Activated T-helper 1 cell treated with anti-CD3 and anti-CD28 coated beads, Interleukin-12 subunit alpha, Interleukin-12 subunit beta, Interleukin-2, Interleukin-4 antibody, amounts not matched to agents 30 ng/mL and 10 ng/mL and 1 ng/mL, durations not matched to agents 14 hours and 24 hours and 36 hours (primary cell): ENCODE measurements at regions of chr4 and their contacts with region 1.

Region 1: DNA sequence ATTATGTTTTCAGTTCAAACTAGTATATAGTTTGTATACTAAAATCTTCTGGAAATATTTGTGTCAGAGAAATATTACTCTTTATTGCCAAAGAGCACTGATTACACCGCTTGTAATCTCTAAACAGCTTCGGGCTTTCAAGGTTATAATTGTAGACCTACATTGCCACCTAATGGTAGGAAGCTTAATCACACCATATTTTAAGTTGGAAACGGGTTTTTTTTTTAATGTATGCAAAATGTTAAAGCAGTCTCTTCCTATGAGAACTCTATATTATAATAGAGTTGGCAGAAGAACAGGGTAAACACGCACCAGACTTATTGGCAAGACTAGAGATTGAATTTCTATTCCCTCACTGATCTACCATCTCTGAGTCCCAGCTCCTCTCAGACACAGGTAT is 19.5 kb upstream of the NFXL1 start:
- DNase-seq: no peak
- H3K4me3 Mint-ChIP-seq: no peak overlapping the region
- H3K27ac Mint-ChIP-seq: no peak overlapping the region
- H3K4me1 Mint-ChIP-seq: no peaks in the 10 kb centered on the region
- H3K27me3 Mint-ChIP-seq: peaks cover 6% of the 10 kb centered on the region

Region 2: GRCh38 chr4:47668810-47669408 is 264.9 kb before region 1 on chr4:
- intact Hi-C with region 1: loop called (anchors 1 kb)
- DNase-seq: no peak
- H3K4me3 Mint-ChIP-seq: no peak overlapping the region
- H3K27ac Mint-ChIP-seq: no peak overlapping the region
- H3K4me1 Mint-ChIP-seq: no peaks in the 10 kb centered on the region
- H3K27me3 Mint-ChIP-seq: peaks cover 14% of the 10 kb centered on the region

Region 3: DNA sequence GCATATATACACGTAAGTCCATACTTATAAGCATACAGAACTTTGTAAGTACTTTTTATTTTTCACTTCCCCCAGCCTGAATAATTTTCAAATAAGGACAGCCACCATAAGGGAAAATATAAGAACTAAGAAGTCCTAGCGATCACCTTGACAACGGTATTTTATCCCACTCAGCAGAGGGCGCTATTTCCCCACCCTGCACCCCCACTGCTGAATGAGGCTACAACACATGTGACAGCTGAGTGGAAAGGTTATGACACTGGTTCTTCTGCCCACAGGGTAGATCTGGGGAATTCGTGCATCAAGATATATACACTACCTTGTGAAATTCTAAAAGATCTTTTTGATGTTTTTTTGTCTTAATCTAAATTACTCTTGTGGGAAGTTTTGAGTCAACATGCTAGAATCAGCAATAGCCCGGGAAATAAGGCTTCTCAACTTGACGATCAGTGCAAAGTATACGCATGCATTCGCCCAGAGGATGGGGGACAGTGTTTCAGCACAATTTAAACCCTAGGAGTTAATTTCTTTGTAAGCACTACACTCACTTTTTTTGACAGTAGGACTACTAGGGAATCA is 247.5 kb before region 1 on chr4:
- intact Hi-C with region 1: loop called (anchors 1 kb)
- DNase-seq: peak; percentile 29
- H3K4me3 Mint-ChIP-seq: no peak overlapping the region
- H3K27ac Mint-ChIP-seq: no peak overlapping the region
- H3K4me1 Mint-ChIP-seq: no peaks in the 10 kb centered on the region
- H3K27me3 Mint-ChIP-seq: peaks cover 8% of the 10 kb centered on the region

Region 4: GRCh38 chr4:47704693-47705325 is 229.0 kb before region 1 on chr4:
- intact Hi-C with region 1: loop called (anchors 5 kb)
- DNase-seq: no peak
- H3K4me3 Mint-ChIP-seq: no peak overlapping the region
- H3K27ac Mint-ChIP-seq: no peak overlapping the region
- H3K4me1 Mint-ChIP-seq: no peaks in the 10 kb centered on the region
- H3K27me3 Mint-ChIP-seq: peaks cover 28% of the 10 kb centered on the region